ENCODE measurements at regions of chr14 and their contacts with region 1.

Region 1: GRCh38 chr14:62307844-62308243 is 545.6 kb downstream of the SNAPC1 start:
- DNase-seq: no peak
- ATAC-seq: no peak
- H3K4me3 ChIP-seq: no peak overlapping the region
- H3K4me3 Mint-ChIP-seq: no peak overlapping the region
- H3K27ac ChIP-seq: no peak overlapping the region
- H3K27ac Mint-ChIP-seq: no peak overlapping the region
- H3K4me1 ChIP-seq: no peaks in the 10 kb centered on the region
- H3K4me1 Mint-ChIP-seq: no peaks in the 10 kb centered on the region
- H3K27me3 ChIP-seq: no peaks in the 10 kb centered on the region
- H3K27me3 Mint-ChIP-seq: no peaks in the 10 kb centered on the region
- CTCF ChIP-seq: no peak

Region 2: GRCh38 chr14:62269204-62269603 is 38.6 kb before region 1 on chr14:
- CTCF ChIA-PET with region 1: no interaction called
- POLR2A ChIA-PET with region 1: no interaction called
- intact Hi-C with region 1: loop called in 1 of 2 experiments (anchors 1 kb)
- DNase-seq: no peak
- ATAC-seq: no peak
- H3K4me3 ChIP-seq: no peak overlapping the region
- H3K4me3 Mint-ChIP-seq: no peak overlapping the region
- H3K27ac ChIP-seq: no peak overlapping the region
- H3K27ac Mint-ChIP-seq: no peak overlapping the region
- H3K4me1 ChIP-seq: no peaks in the 10 kb centered on the region
- H3K4me1 Mint-ChIP-seq: no peaks in the 10 kb centered on the region
- H3K27me3 ChIP-seq: no peaks in the 10 kb centered on the region
- H3K27me3 Mint-ChIP-seq: peaks cover 2% of the 10 kb centered on the region
- CTCF ChIP-seq: no peak

Region 3: DNA sequence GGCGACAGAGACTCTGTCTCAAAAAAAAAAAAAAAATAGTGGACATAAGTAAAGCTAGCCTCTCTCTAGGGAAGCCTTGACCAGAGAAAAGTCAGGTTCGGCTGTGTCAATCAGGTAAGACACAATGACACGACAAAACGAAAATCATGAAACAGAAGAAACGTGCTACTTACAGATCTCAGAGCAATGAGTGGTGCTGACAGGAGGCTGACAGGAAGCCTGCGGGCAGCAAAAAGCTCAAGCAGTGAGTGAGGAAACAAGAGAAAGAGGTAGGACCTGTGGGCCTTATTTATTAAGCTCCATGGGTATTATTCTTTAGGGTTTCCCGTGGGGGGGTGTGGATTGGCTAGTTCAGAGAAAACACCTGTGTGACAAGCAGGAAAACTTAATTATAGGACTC is 374.4 kb after region 1 on chr14:
- CTCF ChIA-PET with region 1: no interaction called
- POLR2A ChIA-PET with region 1: no interaction called
- intact Hi-C with region 1: no loop called
- DNase-seq: no peak
- ATAC-seq: no peak
- H3K4me3 ChIP-seq: no peak overlapping the region
- H3K4me3 Mint-ChIP-seq: no peak overlapping the region
- H3K27ac ChIP-seq: no peak overlapping the region
- H3K27ac Mint-ChIP-seq: no peak overlapping the region
- H3K4me1 ChIP-seq: no peaks in the 10 kb centered on the region
- H3K4me1 Mint-ChIP-seq: no peaks in the 10 kb centered on the region
- H3K27me3 ChIP-seq: no peaks in the 10 kb centered on the region
- H3K27me3 Mint-ChIP-seq: no peaks in the 10 kb centered on the region
- CTCF ChIP-seq: no peak

Measured in CD8-positive, alpha-beta T cell (primary cell).